ENCODE measurements at regions of chr1 and their contacts with region 1.

Region 1: DNA sequence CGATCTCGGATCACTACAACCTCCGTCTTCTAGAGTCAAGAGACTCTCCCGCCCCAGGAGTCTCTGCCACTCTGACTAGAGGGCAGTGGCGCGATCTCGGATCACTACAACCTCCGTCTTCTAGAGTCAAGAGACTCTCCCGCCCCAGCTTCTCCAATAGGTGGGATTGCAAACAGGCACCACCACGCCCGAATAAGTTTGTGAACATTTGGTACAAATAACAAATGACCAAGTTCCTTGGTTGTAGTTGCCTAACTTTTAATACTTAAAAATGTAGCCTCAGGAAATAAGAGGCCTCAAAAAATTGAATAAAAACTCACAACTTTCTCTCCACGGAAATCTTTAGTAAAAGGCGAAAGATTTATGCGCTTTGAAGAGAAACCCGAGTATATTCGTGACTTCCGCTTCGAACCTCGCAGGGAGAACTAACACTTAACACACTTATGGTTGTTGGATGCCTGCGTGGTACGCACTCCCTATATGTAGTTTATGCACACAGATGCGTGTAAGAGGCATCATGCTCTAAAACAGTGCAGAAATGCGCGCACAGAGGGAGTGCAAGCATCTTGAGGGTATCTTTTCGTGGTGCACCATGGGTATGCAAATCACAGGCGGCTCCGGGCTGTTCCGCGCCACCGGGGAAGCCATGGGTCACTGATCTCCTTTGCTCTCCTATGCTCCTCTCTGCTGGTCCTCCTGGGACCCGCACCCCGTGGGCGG is 11.4 kb downstream of the BTBD19 start:
- DNase-seq: peak; percentile 72 to 94 (median 80)
- ATAC-seq: peak; percentile 79
- H3K4me3 ChIP-seq: peak overlapping the region; percentile 86 to 87
- H3K4me3 Mint-ChIP-seq: peak overlapping the region; percentile 92
- H3K27ac ChIP-seq: peak overlapping the region; percentile 99 to 100
- H3K27ac Mint-ChIP-seq: peak overlapping the region; percentile 100
- H3K4me1 ChIP-seq: peaks cover 19% of the 10 kb centered on the region
- H3K4me1 Mint-ChIP-seq: peaks cover 35% of the 10 kb centered on the region
- H3K27me3 ChIP-seq: no peaks in the 10 kb centered on the region
- H3K27me3 Mint-ChIP-seq: no peaks in the 10 kb centered on the region
- CTCF ChIP-seq: no peak

Region 2: DNA sequence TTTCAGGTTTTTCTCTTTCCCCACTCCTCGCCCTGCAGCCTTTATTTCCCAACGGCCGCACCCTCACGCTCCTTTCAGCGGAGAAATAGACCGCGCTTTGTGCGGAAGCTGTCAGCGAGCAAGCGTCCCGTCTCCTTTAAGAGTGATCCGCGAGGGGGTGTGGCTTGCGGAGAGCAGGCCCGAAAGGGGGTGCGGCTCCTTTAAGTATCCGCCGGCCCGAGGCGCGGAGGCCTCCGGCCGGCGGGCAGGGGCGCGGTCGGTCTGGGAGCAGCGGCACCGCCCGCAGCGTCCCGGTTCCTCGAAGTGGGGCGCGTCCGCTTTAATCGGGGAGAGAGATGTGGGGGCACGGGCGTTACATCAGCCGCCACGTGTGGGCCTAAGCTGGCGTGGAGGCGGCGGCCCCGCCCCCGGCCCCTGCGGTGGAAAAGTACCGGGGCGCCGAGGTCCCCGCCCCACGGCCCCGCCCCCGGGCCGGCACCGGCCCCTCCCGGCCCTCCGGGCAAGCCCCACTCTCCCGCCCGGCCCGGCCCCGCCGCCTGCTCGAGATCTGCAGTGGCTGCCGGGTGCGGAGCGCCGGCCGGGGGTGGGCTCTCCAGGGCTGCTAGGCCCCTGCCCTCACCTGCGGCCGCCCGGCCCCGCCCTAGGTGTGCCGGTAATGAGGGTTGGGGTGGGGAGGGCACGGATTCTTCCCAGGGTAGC is 789.7 kb before region 1 on chr1:
- CTCF ChIA-PET with region 1: no interaction called
- POLR2A ChIA-PET with region 1: no interaction called
- intact Hi-C with region 1: no loop called
- DNase-seq: peak; percentile 57 to 90 (median 85)
- ATAC-seq: peak; percentile 78
- H3K4me3 ChIP-seq: peak overlapping the region; percentile 64 to 76
- H3K4me3 Mint-ChIP-seq: peak overlapping the region; percentile 97
- H3K27ac ChIP-seq: peak overlapping the region; percentile 51 to 60
- H3K27ac Mint-ChIP-seq: peak overlapping the region; percentile 95
- H3K4me1 ChIP-seq: peaks cover 12% of the 10 kb centered on the region
- H3K4me1 Mint-ChIP-seq: peaks cover 20% of the 10 kb centered on the region
- H3K27me3 ChIP-seq: no peaks in the 10 kb centered on the region
- H3K27me3 Mint-ChIP-seq: no peaks in the 10 kb centered on the region
- CTCF ChIP-seq: no peak

Region 3: GRCh38 chr1:44739361-44740178 is 80.2 kb before region 1 on chr1 and contains the start of gene KIF2C:
- CTCF ChIA-PET with region 1: no interaction called
- POLR2A ChIA-PET with region 1: no interaction called
- intact Hi-C with region 1: loop called in 1 of 2 experiments (anchors 1 kb)
- DNase-seq: peak; percentile 93 to 98 (median 96)
- ATAC-seq: peak; percentile 100
- H3K4me3 ChIP-seq: peak within 1 kb of the TSS; percentile 81 to 84
- H3K4me3 Mint-ChIP-seq: peak within 1 kb of the TSS; percentile 93
- H3K27ac ChIP-seq: peak within 1 kb of the TSS; percentile 69 to 88
- H3K27ac Mint-ChIP-seq: peak within 1 kb of the TSS; percentile 97
- H3K4me1 ChIP-seq: peaks cover 12% of the 10 kb centered on the region
- H3K4me1 Mint-ChIP-seq: peaks cover 17% of the 10 kb centered on the region
- H3K27me3 ChIP-seq: no peaks in the 10 kb centered on the region
- H3K27me3 Mint-ChIP-seq: no peaks in the 10 kb centered on the region
- CTCF ChIP-seq: no peak
- total RNA-seq, gene KIF2C: 0.58 to 0.81 TPM

Region 4: GRCh38 chr1:44786138-44786840 is 33.5 kb before region 1 on chr1:
- CTCF ChIA-PET with region 1: interaction called, 15 read pairs
- POLR2A ChIA-PET with region 1: interaction called, 8 read pairs
- intact Hi-C with region 1: loop called (anchors 1 kb)
- DNase-seq: peak in 8 of 9 experiments; percentile 63 to 89 (median 78)
- ATAC-seq: peak; percentile 85
- H3K4me3 ChIP-seq: peak overlapping the region; percentile 56 to 94
- H3K4me3 Mint-ChIP-seq: peak overlapping the region; percentile 82
- H3K27ac ChIP-seq: peak overlapping the region; percentile 33 to 63
- H3K27ac Mint-ChIP-seq: peak overlapping the region; percentile 86
- H3K4me1 ChIP-seq: peaks cover 34% of the 10 kb centered on the region
- H3K4me1 Mint-ChIP-seq: peaks cover 29% of the 10 kb centered on the region
- H3K27me3 ChIP-seq: no peaks in the 10 kb centered on the region
- H3K27me3 Mint-ChIP-seq: no peaks in the 10 kb centered on the region
- CTCF ChIP-seq: peak; percentile 100

Region 5: GRCh38 chr1:44799770-44800584 is 19.8 kb before region 1 on chr1 and contains the start of gene PLK3:
- CTCF ChIA-PET with region 1: interaction called, 33 read pairs
- POLR2A ChIA-PET with region 1: interaction called, 189 read pairs
- intact Hi-C with region 1: loop called (anchors 1 to 2 kb)
- DNase-seq: peak; percentile 97 to 99 (median 98)
- ATAC-seq: peak; percentile 83
- H3K4me3 ChIP-seq: peak within 1 kb of the TSS; percentile 79 to 95
- H3K4me3 Mint-ChIP-seq: peak within 1 kb of the TSS; percentile 87
- H3K27ac ChIP-seq: peak within 1 kb of the TSS; percentile 91 to 98
- H3K27ac Mint-ChIP-seq: peak within 1 kb of the TSS; percentile 98
- H3K4me1 ChIP-seq: peaks cover 29% of the 10 kb centered on the region
- H3K4me1 Mint-ChIP-seq: peaks cover 37% of the 10 kb centered on the region
- H3K27me3 ChIP-seq: no peaks in the 10 kb centered on the region
- H3K27me3 Mint-ChIP-seq: no peaks in the 10 kb centered on the region
- CTCF ChIP-seq: peak; percentile 81
- total RNA-seq, gene PLK3: 568 to 599 TPM

Region 6: GRCh38 chr1:44807262-44808062 is 12.3 kb before region 1 on chr1 and contains the start of gene DYNLT4:
- CTCF ChIA-PET with region 1: interaction called, 16 read pairs
- POLR2A ChIA-PET with region 1: interaction called, 189 read pairs
- intact Hi-C with region 1: loop called (anchors 1 kb)
- DNase-seq: peak; percentile 83 to 98 (median 93)
- ATAC-seq: peak; percentile 58
- H3K4me3 ChIP-seq: peak within 1 kb of the TSS in 1 of 2 experiments; percentile 35
- H3K4me3 Mint-ChIP-seq: peak within 1 kb of the TSS; percentile 60
- H3K27ac ChIP-seq: peak within 1 kb of the TSS; percentile 93 to 96
- H3K27ac Mint-ChIP-seq: peak within 1 kb of the TSS; percentile 99
- H3K4me1 ChIP-seq: peaks cover 70% of the 10 kb centered on the region
- H3K4me1 Mint-ChIP-seq: peaks cover 78% of the 10 kb centered on the region
- H3K27me3 ChIP-seq: no peaks in the 10 kb centered on the region
- H3K27me3 Mint-ChIP-seq: no peaks in the 10 kb centered on the region
- CTCF ChIP-seq: no peak
- total RNA-seq, gene DYNLT4: 2.2 to 2.5 TPM

Region 7: GRCh38 chr1:44835738-44836675 is 16.2 kb after region 1 on chr1:
- CTCF ChIA-PET with region 1: interaction called, 4 read pairs
- POLR2A ChIA-PET with region 1: interaction called, 6 read pairs
- intact Hi-C with region 1: loop called in 1 of 2 experiments (anchors 1 kb)
- DNase-seq: peak; percentile 68 to 91 (median 85)
- ATAC-seq: peak; percentile 98
- H3K4me3 ChIP-seq: no peak overlapping the region
- H3K4me3 Mint-ChIP-seq: peak overlapping the region; percentile 16
- H3K27ac ChIP-seq: no peak overlapping the region
- H3K27ac Mint-ChIP-seq: no peak overlapping the region
- H3K4me1 ChIP-seq: no peaks in the 10 kb centered on the region
- H3K4me1 Mint-ChIP-seq: peaks cover 9% of the 10 kb centered on the region
- H3K27me3 ChIP-seq: no peaks in the 10 kb centered on the region
- H3K27me3 Mint-ChIP-seq: peaks cover 4% of the 10 kb centered on the region
- CTCF ChIP-seq: peak; percentile 73

Region 8: DNA sequence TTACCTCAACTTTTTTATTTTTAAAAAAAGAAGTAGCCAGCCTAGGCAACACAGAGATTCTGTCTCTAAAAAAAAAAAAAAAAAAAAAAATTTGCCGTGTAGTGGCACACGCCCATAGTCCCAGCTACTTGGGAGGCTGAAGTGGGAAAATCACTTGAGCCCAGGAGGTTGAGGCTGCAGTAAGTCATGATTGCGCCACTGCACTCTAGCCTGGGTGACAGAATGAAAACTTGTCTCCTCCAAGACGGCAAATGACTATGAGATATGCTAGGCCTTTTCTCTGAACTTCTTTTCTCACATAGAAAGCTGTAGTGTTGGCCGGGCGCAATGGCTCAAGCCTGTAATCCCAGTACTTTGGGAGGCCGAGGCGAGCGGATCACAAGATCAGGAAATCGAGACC is 48.0 kb after region 1 on chr1:
- CTCF ChIA-PET with region 1: no interaction called
- POLR2A ChIA-PET with region 1: no interaction called
- intact Hi-C with region 1: no loop called
- DNase-seq: no peak
- ATAC-seq: no peak
- H3K4me3 ChIP-seq: no peak overlapping the region
- H3K4me3 Mint-ChIP-seq: no peak overlapping the region
- H3K27ac ChIP-seq: no peak overlapping the region
- H3K27ac Mint-ChIP-seq: no peak overlapping the region
- H3K4me1 ChIP-seq: no peaks in the 10 kb centered on the region
- H3K4me1 Mint-ChIP-seq: no peaks in the 10 kb centered on the region
- H3K27me3 ChIP-seq: no peaks in the 10 kb centered on the region
- H3K27me3 Mint-ChIP-seq: no peaks in the 10 kb centered on the region
- CTCF ChIP-seq: no peak

Measured in CD8-positive, alpha-beta T cell (primary cell).